ENCODE measurements at regions of chr6 and their contacts with region 1.

Region 1: DNA sequence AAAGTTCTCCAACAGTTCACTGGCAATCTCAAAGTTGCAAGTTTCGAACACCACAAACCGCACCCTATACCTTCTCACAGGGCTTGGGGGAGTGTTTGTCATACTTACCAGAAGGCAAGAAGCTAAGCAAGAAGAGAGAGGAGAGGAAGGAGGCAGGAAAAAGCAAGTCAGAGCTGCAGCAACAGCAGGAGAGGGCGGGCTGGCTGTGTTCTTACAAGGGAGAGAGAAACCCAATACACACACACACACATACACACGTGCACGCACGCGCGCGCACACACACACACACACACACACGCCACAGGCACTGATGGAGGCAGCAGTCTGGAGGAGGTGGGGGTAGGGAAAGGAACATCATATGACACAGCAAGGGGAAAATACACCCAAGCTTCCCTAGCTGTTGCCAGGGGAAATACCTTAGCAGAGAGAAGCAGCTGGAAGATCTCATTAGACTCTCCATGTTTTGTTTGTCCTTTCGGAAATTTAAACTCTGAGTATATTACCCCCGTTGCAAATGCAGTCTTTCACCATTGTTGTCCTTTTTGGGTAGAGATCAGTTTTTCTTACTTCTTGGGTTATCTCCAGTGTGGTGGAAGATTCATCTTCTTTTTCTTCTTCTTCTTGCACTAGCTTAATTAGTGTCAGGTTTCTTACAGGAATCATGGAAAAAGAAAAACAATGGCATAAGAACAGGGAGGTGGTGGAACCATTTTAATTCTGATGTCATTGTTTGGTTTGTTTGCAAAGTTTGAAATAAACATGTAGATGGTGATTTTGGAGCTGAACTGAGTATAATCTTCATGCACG is at the start of gene TXLNB:
- DNase-seq: peak; percentile 83
- ATAC-seq: peak; percentile 88
- H3K4me3 ChIP-seq: peak within 1 kb of the TSS; percentile 40
- H3K27ac ChIP-seq: peak within 1 kb of the TSS; percentile 88
- H3K4me1 ChIP-seq: peaks cover 35% of the 10 kb centered on the region
- H3K27me3 ChIP-seq: no peaks in the 10 kb centered on the region
- CTCF ChIP-seq: no peak
- EP300 ChIP-seq: peak; percentile 46 to 81; a peak in 2 of 4 replicates
- POLR2A ChIP-seq: 0 out of 2 replicates have a peak, but pooled peaks have one; percentile 51
- RAD21 ChIP-seq: no peak; the same call in 1 of the 2 replicates
- polyA plus RNA-seq, gene TXLNB: 0.07 to 0.10 TPM

Region 2: DNA sequence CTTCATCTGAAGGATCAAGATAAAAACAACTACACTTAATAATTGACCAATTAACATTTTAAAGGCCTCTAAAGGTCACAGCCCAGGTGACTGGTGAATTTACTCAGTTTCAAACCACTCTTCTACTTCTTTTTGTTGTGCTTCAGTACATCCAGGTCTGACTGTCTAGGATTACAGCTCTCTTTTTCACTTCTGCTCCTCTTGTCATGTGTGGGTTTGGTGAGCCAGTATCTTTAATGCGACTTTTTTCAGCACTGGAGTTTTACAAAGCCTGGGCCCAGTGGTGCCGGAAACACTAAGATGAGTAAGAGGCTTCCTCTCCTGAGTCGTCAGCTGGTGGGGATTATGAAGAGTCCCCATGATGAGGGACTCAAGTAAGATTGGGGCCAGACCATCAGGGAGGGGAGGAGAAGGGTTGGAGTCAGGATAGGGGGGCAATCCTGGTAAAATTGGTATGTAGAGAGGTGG is 130.2 kb before region 1 on chr6:
- CTCF ChIA-PET with region 1: no interaction called
- POLR2A ChIA-PET with region 1: no interaction called
- RAD21 ChIA-PET with region 1: no interaction called
- SMC1A ChIA-PET with region 1: no interaction called
- in situ Hi-C with region 1: no loop called
- intact Hi-C with region 1: loop called (anchors 5 kb)
- DNase-seq: peak; percentile 91
- ATAC-seq: peak; percentile 97
- H3K4me3 ChIP-seq: no peak overlapping the region
- H3K27ac ChIP-seq: peak overlapping the region; percentile 48
- H3K4me1 ChIP-seq: peaks cover 19% of the 10 kb centered on the region
- H3K27me3 ChIP-seq: no peaks in the 10 kb centered on the region
- CTCF ChIP-seq: no peak
- EP300 ChIP-seq: peak; percentile 66 to 75
- POLR2A ChIP-seq: no peak
- RAD21 ChIP-seq: peak; percentile 24; the same call in 1 of the 2 replicates

Region 3: GRCh38 chr6:139236105-139236504 is 55.9 kb before region 1 on chr6:
- CTCF ChIA-PET with region 1: no interaction called
- POLR2A ChIA-PET with region 1: no interaction called
- RAD21 ChIA-PET with region 1: no interaction called
- SMC1A ChIA-PET with region 1: no interaction called
- in situ Hi-C with region 1: no loop called
- intact Hi-C with region 1: no loop called
- DNase-seq: no peak
- ATAC-seq: no peak
- H3K4me3 ChIP-seq: no peak overlapping the region
- H3K27ac ChIP-seq: no peak overlapping the region
- H3K4me1 ChIP-seq: no peaks in the 10 kb centered on the region
- H3K27me3 ChIP-seq: no peaks in the 10 kb centered on the region
- CTCF ChIP-seq: no peak
- EP300 ChIP-seq: no peak
- POLR2A ChIP-seq: no peak
- RAD21 ChIP-seq: no peak

Region 4: GRCh38 chr6:139262519-139263300 is 29.3 kb before region 1 on chr6:
- CTCF ChIA-PET with region 1: interaction called, 8 read pairs
- POLR2A ChIA-PET with region 1: interaction called, 8 read pairs
- RAD21 ChIA-PET with region 1: interaction called, 26 read pairs
- SMC1A ChIA-PET with region 1: interaction called, 19 read pairs
- in situ Hi-C with region 1: no loop called
- intact Hi-C with region 1: no loop called
- DNase-seq: no peak
- ATAC-seq: peak; percentile 94
- H3K4me3 ChIP-seq: no peak overlapping the region
- H3K27ac ChIP-seq: no peak overlapping the region
- H3K4me1 ChIP-seq: no peaks in the 10 kb centered on the region
- H3K27me3 ChIP-seq: no peaks in the 10 kb centered on the region
- CTCF ChIP-seq: no peak
- EP300 ChIP-seq: peak in 1 of 2 experiments; percentile 15; a peak in 1 of 4 replicates
- POLR2A ChIP-seq: no peak
- RAD21 ChIP-seq: no peak

Region 5: GRCh38 chr6:139278190-139278589 is 13.8 kb before region 1 on chr6:
- CTCF ChIA-PET with region 1: interaction called, 4 read pairs
- POLR2A ChIA-PET with region 1: interaction called, 5 read pairs
- RAD21 ChIA-PET with region 1: interaction called, 6 read pairs
- SMC1A ChIA-PET with region 1: interaction called, 10 read pairs
- in situ Hi-C with region 1: no loop called
- intact Hi-C with region 1: no loop called
- DNase-seq: no peak
- ATAC-seq: no peak
- H3K4me3 ChIP-seq: no peak overlapping the region
- H3K27ac ChIP-seq: no peak overlapping the region
- H3K4me1 ChIP-seq: peaks cover 9% of the 10 kb centered on the region
- H3K27me3 ChIP-seq: no peaks in the 10 kb centered on the region
- CTCF ChIP-seq: no peak
- EP300 ChIP-seq: no peak
- POLR2A ChIP-seq: no peak
- RAD21 ChIP-seq: no peak

Region 6: DNA sequence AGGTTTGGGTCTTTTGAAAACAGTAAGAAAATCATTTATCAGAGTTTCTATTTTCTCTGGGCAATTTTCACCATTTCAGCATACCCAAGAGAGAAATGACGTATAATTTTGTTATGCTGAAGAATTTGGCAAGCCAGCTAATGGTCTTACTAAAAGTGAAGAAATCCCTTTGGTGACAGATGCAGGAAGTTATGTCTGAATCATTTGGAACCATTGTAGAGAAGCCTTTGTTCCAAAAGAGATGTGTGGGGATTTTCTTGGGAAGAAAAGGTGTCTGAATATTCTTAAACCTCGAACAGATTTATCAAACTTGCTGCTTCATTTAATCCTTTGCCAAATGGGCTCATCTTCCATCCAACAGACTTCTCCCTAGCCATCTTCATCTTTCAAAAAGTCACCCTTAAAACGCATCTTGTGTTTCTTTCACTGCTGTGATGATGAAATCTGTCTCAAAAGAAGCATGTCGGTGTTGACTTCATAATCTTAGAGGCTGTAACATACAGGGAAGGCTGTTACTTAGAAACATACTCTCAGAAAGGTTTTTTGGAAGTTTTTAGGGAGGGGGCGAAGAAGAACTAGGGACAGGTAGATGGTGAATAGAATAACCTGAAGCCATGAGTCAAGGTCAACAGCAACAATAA is 42.9 kb after region 1 on chr6:
- CTCF ChIA-PET with region 1: interaction called, 4 read pairs
- POLR2A ChIA-PET with region 1: interaction called, 4 read pairs
- RAD21 ChIA-PET with region 1: interaction called, 20 read pairs
- SMC1A ChIA-PET with region 1: interaction called, 10 read pairs
- in situ Hi-C with region 1: no loop called
- intact Hi-C with region 1: no loop called
- DNase-seq: no peak
- ATAC-seq: no peak
- H3K4me3 ChIP-seq: no peak overlapping the region
- H3K27ac ChIP-seq: no peak overlapping the region
- H3K4me1 ChIP-seq: peaks cover 7% of the 10 kb centered on the region; the same call in 1 of the 2 replicates
- H3K27me3 ChIP-seq: no peaks in the 10 kb centered on the region
- CTCF ChIP-seq: no peak
- EP300 ChIP-seq: no peak
- POLR2A ChIP-seq: no peak
- RAD21 ChIP-seq: no peak

Measured in GM12878 (cell line).